CD14-positive monocyte (primary cell): ENCODE measurements at regions of chr9 and their contacts with region 1.

Region 1: GRCh38 chr9:33721674-33722358 is 73.5 kb upstream of the PRSS3 start:
- DNase-seq: peak; percentile 78 to 85 (median 79)
- H3K4me3 ChIP-seq: no peak overlapping the region
- H3K4me3 Mint-ChIP-seq: no peak overlapping the region
- H3K27ac ChIP-seq: no peak overlapping the region
- H3K27ac Mint-ChIP-seq: no peak overlapping the region
- H3K4me1 ChIP-seq: peaks cover 25 to 27% of the 10 kb centered on the region in 2 donors
- H3K4me1 Mint-ChIP-seq: peaks cover 28% of the 10 kb centered on the region
- H3K27me3 ChIP-seq: no peaks in the 10 kb centered on the region
- H3K27me3 Mint-ChIP-seq: peaks cover 1 to 11% (median 4%) of the 10 kb centered on the region in 3 donors
- CTCF ChIP-seq: peak; percentile 100

Region 2: DNA sequence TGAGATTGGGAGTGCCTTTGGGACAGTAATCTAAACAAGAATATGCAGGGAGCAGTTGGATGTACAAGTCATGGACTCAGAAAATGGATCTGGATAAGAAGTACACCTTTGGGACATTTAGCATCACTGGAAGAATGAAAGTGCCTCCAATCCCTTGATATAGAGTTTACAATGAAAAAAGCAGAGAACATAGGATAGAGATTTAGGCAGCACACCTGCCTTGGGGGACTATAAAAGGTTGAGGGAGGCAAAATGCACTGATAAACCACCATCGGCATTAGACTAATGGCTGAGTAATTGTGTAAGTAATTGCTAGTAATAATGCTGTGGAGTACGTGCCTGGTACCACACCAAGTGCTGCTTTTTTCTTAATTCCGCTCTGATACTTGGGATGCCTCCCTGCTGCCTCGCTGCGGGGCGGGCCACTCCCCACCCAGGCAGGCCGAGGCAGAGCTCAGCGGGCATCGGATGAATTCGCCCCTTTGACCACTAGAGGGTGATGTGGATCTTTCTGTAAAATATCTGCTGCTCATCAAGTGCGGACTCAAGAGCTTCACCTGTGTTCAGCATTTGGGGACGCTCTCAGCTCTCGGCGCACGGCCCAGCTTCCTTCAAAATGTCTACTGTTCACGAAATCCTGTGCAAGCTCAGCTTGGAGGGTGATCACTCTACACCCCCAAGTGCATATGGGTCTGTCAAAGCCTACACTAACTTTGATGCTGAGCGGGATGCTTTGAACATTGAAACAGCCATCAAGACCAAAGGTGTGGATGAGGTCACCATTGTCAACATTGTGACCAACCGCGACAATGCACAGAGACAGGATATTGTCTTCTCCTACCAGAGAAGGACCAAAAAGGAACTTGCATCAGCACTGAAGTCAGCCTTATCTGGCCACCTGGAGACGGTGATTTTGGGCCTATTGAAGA is 97.9 kb before region 1 on chr9:
- intact Hi-C with region 1: loop called (anchors 2 kb)
- DNase-seq: peak; percentile 60 to 76 (median 71)
- H3K4me3 ChIP-seq: no peak overlapping the region
- H3K4me3 Mint-ChIP-seq: no peak overlapping the region
- H3K27ac ChIP-seq: no peak overlapping the region
- H3K27ac Mint-ChIP-seq: no peak overlapping the region
- H3K4me1 ChIP-seq: no peaks in the 10 kb centered on the region
- H3K4me1 Mint-ChIP-seq: peaks cover 8% of the 10 kb centered on the region
- H3K27me3 ChIP-seq: no peaks in the 10 kb centered on the region
- H3K27me3 Mint-ChIP-seq: peaks cover 1 to 8% (median 4%) of the 10 kb centered on the region in 3 donors
- CTCF ChIP-seq: peak; percentile 94

Region 3: DNA sequence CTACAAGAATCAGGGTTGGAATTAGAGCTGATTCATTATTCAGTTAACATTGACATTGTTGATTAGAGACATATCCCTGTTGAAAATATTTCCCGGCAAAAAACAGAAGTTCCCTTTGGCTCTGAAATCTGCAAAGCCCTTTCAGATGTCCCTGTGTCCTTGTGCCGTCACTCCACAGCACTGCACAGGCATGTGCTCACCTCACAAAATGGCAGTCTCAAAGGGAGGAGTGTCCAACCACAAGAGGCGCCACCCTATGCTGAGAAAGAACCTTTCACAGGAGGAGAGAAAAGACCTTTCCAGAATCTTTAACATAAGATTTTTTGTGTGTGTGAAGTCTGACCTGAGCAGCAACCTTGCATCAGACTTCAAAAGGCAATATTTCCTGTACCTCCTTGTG is 39.3 kb before region 1 on chr9:
- intact Hi-C with region 1: loop called in 1 of 2 experiments (anchors 5 kb)
- DNase-seq: no peak
- H3K4me3 ChIP-seq: no peak overlapping the region
- H3K4me3 Mint-ChIP-seq: no peak overlapping the region
- H3K27ac ChIP-seq: no peak overlapping the region
- H3K27ac Mint-ChIP-seq: peak overlapping the region in 1 of 7 donors; percentile 66
- H3K4me1 ChIP-seq: peaks cover 4 to 21% of the 10 kb centered on the region in 2 donors
- H3K4me1 Mint-ChIP-seq: peaks cover 14% of the 10 kb centered on the region
- H3K27me3 ChIP-seq: peaks cover 9 to 12% of the 10 kb centered on the region in 2 donors
- H3K27me3 Mint-ChIP-seq: peaks cover 2 to 20% (median 8%) of the 10 kb centered on the region in 3 donors
- CTCF ChIP-seq: no peak

Region 4: DNA sequence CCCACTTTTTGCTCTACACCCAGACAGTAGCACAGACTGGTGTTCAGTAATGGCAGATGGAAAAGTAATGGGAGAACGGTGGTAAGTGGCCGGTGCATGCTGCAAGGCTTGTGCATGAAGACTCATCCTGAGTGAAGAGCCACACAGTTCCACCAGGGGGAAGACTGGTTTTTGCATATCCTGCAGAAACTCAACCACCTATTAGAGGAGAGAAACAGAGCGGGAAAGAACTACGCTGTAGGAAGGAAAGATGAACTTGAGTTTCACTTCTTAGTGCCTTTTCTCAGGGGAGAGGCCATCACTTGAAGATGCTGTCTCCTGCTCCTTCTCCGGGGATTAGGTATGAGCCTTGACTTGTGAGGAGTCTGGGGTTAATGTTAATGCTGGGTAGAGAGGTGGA is 64.1 kb after region 1 on chr9:
- intact Hi-C with region 1: no loop called
- DNase-seq: no peak
- H3K4me3 ChIP-seq: no peak overlapping the region
- H3K4me3 Mint-ChIP-seq: no peak overlapping the region
- H3K27ac ChIP-seq: no peak overlapping the region
- H3K27ac Mint-ChIP-seq: peak overlapping the region in 1 of 7 donors; percentile 64
- H3K4me1 ChIP-seq: no peaks in the 10 kb centered on the region
- H3K4me1 Mint-ChIP-seq: peaks cover 7% of the 10 kb centered on the region
- H3K27me3 ChIP-seq: no peaks in the 10 kb centered on the region
- H3K27me3 Mint-ChIP-seq: peaks cover 0 to 4% (median 3%) of the 10 kb centered on the region in 3 donors
- CTCF ChIP-seq: peak; percentile 3